ENCODE measurements at regions of chr4 and their contacts with region 1.

Region 1: GRCh38 chr4:53914313-53915016 is 149.9 kb downstream of the CHIC2 start:
- DNase-seq: peak; percentile 97
- H3K4me3 ChIP-seq: no peak overlapping the region
- H3K27ac ChIP-seq: peak overlapping the region; percentile 99
- H3K4me1 ChIP-seq: peaks cover 69% of the 10 kb centered on the region
- H3K27me3 ChIP-seq: no peaks in the 10 kb centered on the region
- CTCF ChIP-seq: no peak

Region 2: GRCh38 chr4:52837726-52838558 is 1076.5 kb before region 1 on chr4:
- CTCF ChIA-PET with region 1: no interaction called
- dilution Hi-C with region 1: no loop called
- in situ Hi-C with region 1: no loop called
- intact Hi-C with region 1: loop called (anchors 10 kb)
- DNase-seq: peak; percentile 97
- H3K4me3 ChIP-seq: peak overlapping the region; percentile 9 to 32 (median 9)
- H3K27ac ChIP-seq: peak overlapping the region; percentile 99
- H3K4me1 ChIP-seq: peaks cover 57% of the 10 kb centered on the region
- H3K27me3 ChIP-seq: no peaks in the 10 kb centered on the region
- CTCF ChIP-seq: no peak

Region 3: DNA sequence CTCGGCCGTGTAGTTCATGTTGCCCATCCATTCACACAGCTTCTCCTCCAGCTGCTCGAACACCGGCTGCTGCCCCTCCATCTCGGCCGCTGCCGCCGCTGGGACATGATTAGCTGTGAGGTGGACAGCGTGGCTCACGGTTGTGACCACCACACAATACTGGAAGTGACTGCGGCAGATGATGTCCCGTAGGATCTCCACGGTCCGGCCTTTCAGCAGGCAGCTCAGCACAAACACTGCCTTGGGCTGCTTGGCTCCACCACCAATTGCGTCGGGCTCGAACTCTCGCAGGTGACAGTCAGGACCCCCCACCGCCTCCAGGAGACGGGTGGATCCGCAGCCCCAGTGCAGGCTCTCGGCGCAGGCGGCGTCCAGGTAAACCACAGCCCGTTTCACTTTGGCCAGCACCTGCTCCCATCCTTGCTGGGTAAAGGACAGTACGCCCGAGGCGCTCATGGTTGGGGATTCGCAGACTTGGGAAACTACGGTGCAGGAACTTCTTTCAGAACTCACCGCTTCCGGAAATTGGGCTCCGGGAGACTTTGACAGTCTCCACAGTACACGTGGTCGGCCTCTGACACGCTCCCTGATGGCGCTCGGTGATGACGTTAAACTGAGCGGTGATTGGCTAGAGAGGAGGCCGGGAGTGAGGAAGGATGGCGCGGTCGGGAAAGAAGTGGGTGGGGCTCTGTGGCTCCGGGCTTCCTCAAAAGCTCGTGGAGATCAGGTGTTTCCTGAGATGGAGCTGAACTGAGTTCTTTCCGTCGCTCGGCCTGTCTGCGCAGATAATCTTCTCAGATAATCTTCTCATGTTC is 548.8 kb before region 1 on chr4 and contains the start of gene SCFD2:
- CTCF ChIA-PET with region 1: interaction called, 11 read pairs
- dilution Hi-C with region 1: no loop called
- in situ Hi-C with region 1: no loop called
- intact Hi-C with region 1: no loop called
- DNase-seq: peak; percentile 98
- H3K4me3 ChIP-seq: peak within 1 kb of the TSS; percentile 68 to 94 (median 87)
- H3K27ac ChIP-seq: no peak within 1 kb of the TSS
- H3K4me1 ChIP-seq: peaks cover 4% of the 10 kb centered on the region
- H3K27me3 ChIP-seq: no peaks in the 10 kb centered on the region
- CTCF ChIP-seq: no peak
- total RNA-seq, gene SCFD2: 14.4 to 21.5 TPM

Region 4: DNA sequence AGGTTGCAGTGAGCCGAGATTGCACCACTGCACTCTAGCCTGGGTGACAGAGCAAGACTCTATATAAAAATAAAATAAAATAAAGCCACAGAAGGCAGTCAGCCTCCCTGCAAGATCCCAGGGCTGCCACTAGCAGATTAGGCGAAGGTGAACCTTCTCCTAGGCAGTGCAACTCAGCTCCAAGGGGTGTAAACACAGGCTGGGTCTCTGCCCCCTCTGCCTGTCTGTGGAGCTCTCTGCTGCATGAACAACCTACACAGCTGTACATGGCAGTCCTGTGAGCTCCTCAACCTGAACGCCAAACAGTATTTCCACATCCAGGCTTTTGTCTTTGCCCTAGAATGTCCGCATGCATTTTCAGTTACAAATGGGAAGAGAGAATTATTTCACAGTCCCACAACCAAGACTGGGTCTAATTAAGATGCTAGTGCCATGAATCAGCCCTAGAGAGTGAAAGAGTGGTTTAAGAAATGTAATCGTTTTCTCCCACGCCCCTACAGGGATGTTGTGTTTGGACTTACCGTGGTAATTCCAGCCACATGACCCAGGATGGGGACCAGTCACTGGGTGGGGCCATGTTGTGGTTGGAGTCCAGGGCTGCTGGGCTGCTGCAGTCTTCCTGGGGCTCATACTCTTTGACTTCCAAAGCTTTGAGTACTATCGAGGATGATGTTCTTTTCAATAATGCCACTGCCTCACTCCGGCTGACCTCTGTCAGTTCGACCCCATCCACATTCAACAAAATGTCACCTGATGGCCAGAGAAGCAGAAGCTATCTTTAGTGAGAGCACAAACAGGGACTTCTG is 438.0 kb before region 1 on chr4:
- CTCF ChIA-PET with region 1: no interaction called
- dilution Hi-C with region 1: no loop called
- in situ Hi-C with region 1: no loop called
- intact Hi-C with region 1: loop called (anchors 10 kb)
- DNase-seq: peak; percentile 98
- H3K4me3 ChIP-seq: no peak overlapping the region
- H3K27ac ChIP-seq: peak overlapping the region; percentile 87
- H3K4me1 ChIP-seq: peaks cover 56% of the 10 kb centered on the region
- H3K27me3 ChIP-seq: no peaks in the 10 kb centered on the region
- CTCF ChIP-seq: no peak

Region 5: GRCh38 chr4:53551958-53552357 is 362.5 kb before region 1 on chr4:
- CTCF ChIA-PET with region 1: no interaction called
- dilution Hi-C with region 1: no loop called
- in situ Hi-C with region 1: no loop called
- intact Hi-C with region 1: no loop called
- DNase-seq: no peak
- H3K4me3 ChIP-seq: no peak overlapping the region
- H3K27ac ChIP-seq: no peak overlapping the region
- H3K4me1 ChIP-seq: peaks cover 16% of the 10 kb centered on the region
- H3K27me3 ChIP-seq: no peaks in the 10 kb centered on the region
- CTCF ChIP-seq: no peak

Region 6: GRCh38 chr4:53830511-53830910 is 84.0 kb before region 1 on chr4:
- CTCF ChIA-PET with region 1: no interaction called
- dilution Hi-C with region 1: no loop called
- in situ Hi-C with region 1: no loop called
- intact Hi-C with region 1: no loop called
- DNase-seq: no peak
- H3K4me3 ChIP-seq: no peak overlapping the region
- H3K27ac ChIP-seq: no peak overlapping the region
- H3K4me1 ChIP-seq: no peaks in the 10 kb centered on the region
- H3K27me3 ChIP-seq: no peaks in the 10 kb centered on the region
- CTCF ChIP-seq: no peak

Region 7: GRCh38 chr4:53866055-53866454 is 48.4 kb before region 1 on chr4:
- CTCF ChIA-PET with region 1: no interaction called
- dilution Hi-C with region 1: no loop called
- in situ Hi-C with region 1: no loop called
- intact Hi-C with region 1: no loop called
- DNase-seq: no peak
- H3K4me3 ChIP-seq: no peak overlapping the region
- H3K27ac ChIP-seq: no peak overlapping the region
- H3K4me1 ChIP-seq: no peaks in the 10 kb centered on the region
- H3K27me3 ChIP-seq: no peaks in the 10 kb centered on the region
- CTCF ChIP-seq: no peak

Region 8: GRCh38 chr4:53929955-53930798 is 15.7 kb after region 1 on chr4:
- CTCF ChIA-PET with region 1: no interaction called
- dilution Hi-C with region 1: no loop called
- in situ Hi-C with region 1: no loop called
- intact Hi-C with region 1: no loop called
- DNase-seq: peak; percentile 73
- H3K4me3 ChIP-seq: no peak overlapping the region
- H3K27ac ChIP-seq: no peak overlapping the region
- H3K4me1 ChIP-seq: peaks cover 28% of the 10 kb centered on the region
- H3K27me3 ChIP-seq: no peaks in the 10 kb centered on the region
- CTCF ChIP-seq: peak; percentile 75 to 89

Region 9: GRCh38 chr4:53994382-53995102 is 80.1 kb after region 1 on chr4:
- CTCF ChIA-PET with region 1: no interaction called
- dilution Hi-C with region 1: loop called (anchors 5 kb)
- in situ Hi-C with region 1: no loop called
- intact Hi-C with region 1: loop called (anchors 5 kb)
- DNase-seq: no peak
- H3K4me3 ChIP-seq: no peak overlapping the region
- H3K27ac ChIP-seq: no peak overlapping the region
- H3K4me1 ChIP-seq: peaks cover 25% of the 10 kb centered on the region
- H3K27me3 ChIP-seq: no peaks in the 10 kb centered on the region
- CTCF ChIP-seq: no peak